ENCODE measurements at regions of chr4 and their contacts with region 1.

Region 1: GRCh38 chr4:71713611-71714203 is 70.2 kb downstream of the GC start:
- DNase-seq: peak; percentile 12
- ATAC-seq: no peak
- H3K4me3 ChIP-seq: no peak overlapping the region
- H3K27ac ChIP-seq: no peak overlapping the region
- H3K4me1 ChIP-seq: no peaks in the 10 kb centered on the region
- H3K27me3 ChIP-seq: no peaks in the 10 kb centered on the region
- CTCF ChIP-seq: peak; percentile 36; the same call in 1 of the 2 replicates

Region 2: DNA sequence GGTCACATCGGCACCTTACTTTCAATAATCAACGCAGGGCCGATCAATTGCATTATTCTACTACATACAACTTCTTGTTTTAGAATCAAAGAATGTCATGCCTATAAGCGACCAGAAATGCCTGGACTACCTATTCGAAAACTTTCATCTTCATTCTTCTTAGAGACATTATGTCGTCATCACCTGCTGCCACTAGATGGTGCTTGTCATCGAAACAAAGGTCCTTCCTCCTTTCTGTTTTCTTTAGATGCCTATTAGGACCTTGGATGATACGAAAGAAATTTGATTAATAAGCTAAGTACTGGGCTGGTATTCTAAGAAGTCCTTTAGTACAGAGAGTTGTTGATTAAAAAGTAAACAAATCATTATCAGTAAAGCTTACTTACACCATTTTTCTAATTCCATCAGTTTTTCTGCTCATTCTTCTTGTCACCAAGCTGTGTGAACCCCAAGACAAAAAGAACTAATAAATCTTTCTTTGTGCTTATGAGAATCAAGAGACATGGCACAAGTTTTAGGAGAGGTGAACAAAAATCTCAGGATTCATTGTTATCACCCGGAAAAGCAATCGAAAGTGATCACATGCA is 529.4 kb before region 1 on chr4:
- CTCF ChIA-PET with region 1: no interaction called
- POLR2A ChIA-PET with region 1: no interaction called
- in situ Hi-C with region 1: no loop called
- intact Hi-C with region 1: loop called (anchors 2 kb)
- DNase-seq: peak; percentile 15
- ATAC-seq: peak; percentile 72; the same call in 1 of the 2 replicates
- H3K4me3 ChIP-seq: no peak overlapping the region
- H3K27ac ChIP-seq: no peak overlapping the region
- H3K4me1 ChIP-seq: no peaks in the 10 kb centered on the region; the same call in 1 of the 2 replicates
- H3K27me3 ChIP-seq: peaks cover 23% of the 10 kb centered on the region
- CTCF ChIP-seq: peak; percentile 66; the same call in 1 of the 2 replicates

Region 3: GRCh38 chr4:71229477-71230270 is 484.0 kb before region 1 on chr4:
- CTCF ChIA-PET with region 1: no interaction called
- POLR2A ChIA-PET with region 1: no interaction called
- in situ Hi-C with region 1: no loop called
- intact Hi-C with region 1: loop called (anchors 5 kb)
- DNase-seq: peak; percentile 13
- ATAC-seq: no peak
- H3K4me3 ChIP-seq: no peak overlapping the region
- H3K27ac ChIP-seq: no peak overlapping the region
- H3K4me1 ChIP-seq: no peaks in the 10 kb centered on the region
- H3K27me3 ChIP-seq: no peaks in the 10 kb centered on the region; the same call in 1 of the 2 replicates
- CTCF ChIP-seq: peak; percentile 75

Region 4: GRCh38 chr4:71270901-71271300 is 442.8 kb before region 1 on chr4:
- CTCF ChIA-PET with region 1: no interaction called
- POLR2A ChIA-PET with region 1: no interaction called
- in situ Hi-C with region 1: no loop called
- intact Hi-C with region 1: loop called (anchors 5 kb)
- DNase-seq: no peak
- ATAC-seq: 0 out of 2 replicates have a peak, but pooled peaks have one; percentile 68
- H3K4me3 ChIP-seq: no peak overlapping the region
- H3K27ac ChIP-seq: no peak overlapping the region
- H3K4me1 ChIP-seq: no peaks in the 10 kb centered on the region
- H3K27me3 ChIP-seq: no peaks in the 10 kb centered on the region
- CTCF ChIP-seq: peak; percentile 37

Region 5: GRCh38 chr4:71430609-71431008 is 283.1 kb before region 1 on chr4:
- CTCF ChIA-PET with region 1: no interaction called
- POLR2A ChIA-PET with region 1: no interaction called
- in situ Hi-C with region 1: no loop called
- intact Hi-C with region 1: no loop called
- DNase-seq: no peak
- ATAC-seq: no peak
- H3K4me3 ChIP-seq: no peak overlapping the region
- H3K27ac ChIP-seq: no peak overlapping the region
- H3K4me1 ChIP-seq: no peaks in the 10 kb centered on the region
- H3K27me3 ChIP-seq: no peaks in the 10 kb centered on the region
- CTCF ChIP-seq: no peak

Measured in Panc1 (cell line).